Naive thymus-derived CD4-positive, alpha-beta T cell (primary cell): ENCODE measurements at regions of chr1 and their contacts with region 1.

Region 1: DNA sequence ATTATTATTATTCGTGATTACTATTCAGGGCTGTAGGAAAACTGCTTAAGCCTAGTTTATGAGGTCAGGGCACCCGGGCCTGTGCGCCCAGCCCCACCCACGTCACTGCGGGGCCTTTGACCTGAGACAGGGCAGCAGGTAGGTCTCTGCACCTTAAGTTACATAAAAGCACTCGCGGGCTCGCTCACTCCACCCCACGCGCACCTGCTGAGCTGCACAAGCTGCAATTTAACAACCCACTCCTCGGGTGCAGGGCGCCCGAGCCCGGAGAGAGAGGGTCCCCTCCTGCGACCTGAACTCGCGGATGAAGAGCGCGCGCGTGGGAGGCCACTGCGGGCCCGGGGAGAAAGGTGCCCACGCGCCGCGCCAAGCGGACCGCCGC is 477 bp downstream of the ICMT start:
- DNase-seq: no peak
- ATAC-seq: peak; percentile 3
- H3K4me3 ChIP-seq: peak overlapping the region; percentile 43
- H3K4me3 Mint-ChIP-seq: peak overlapping the region; percentile 79 to 90 (median 87)
- H3K27ac ChIP-seq: peak overlapping the region; percentile 66
- H3K27ac Mint-ChIP-seq: peak overlapping the region in 6 of 9 donors; percentile 28 to 78 (median 47)
- H3K4me1 ChIP-seq: peaks cover 0 to 12% of the 10 kb centered on the region in 2 donors
- H3K4me1 Mint-ChIP-seq: peaks cover 0 to 28% (median 18%) of the 10 kb centered on the region in 7 donors
- H3K27me3 ChIP-seq: no peaks in the 10 kb centered on the region
- H3K27me3 Mint-ChIP-seq: peaks cover 11 to 15% (median 12%) of the 10 kb centered on the region in 5 donors

Region 2: DNA sequence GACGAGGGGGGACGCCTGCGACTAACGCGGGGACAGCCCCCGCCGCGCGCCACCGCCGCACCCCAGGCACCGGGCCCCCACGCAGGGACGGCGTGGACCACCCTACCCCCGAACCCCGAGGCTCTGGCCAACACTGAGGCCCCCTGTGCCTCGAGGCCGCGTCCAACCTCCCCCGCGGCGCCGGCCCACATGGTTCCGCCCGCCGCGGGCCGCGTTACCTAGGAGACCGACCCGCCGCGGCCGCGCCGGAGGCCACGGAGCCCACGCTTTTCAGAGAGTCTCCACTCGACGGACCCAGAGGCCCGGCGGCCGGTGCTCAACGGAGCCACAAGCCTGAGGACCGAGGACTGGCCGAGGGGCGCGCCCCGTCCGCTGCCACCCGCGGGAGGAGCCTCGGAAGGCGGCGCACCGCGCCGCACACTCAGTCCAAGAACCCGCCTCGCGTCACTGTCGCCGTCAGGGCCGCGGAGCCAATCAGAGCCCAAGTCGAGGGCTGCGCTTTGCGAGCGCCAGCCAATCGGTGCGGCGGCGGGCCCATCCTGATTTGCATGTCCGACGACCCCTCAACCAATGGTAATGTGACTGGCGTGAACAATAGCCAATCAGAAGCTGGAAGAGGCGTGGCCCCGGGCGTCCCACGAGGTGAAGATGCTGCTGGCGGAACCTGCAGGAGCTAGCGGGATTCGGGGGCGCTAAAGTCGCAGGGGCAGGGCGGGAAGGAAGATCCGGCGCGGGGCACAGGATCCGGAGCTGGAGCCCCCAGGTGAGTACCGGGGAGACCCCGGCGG is 243.1 kb before region 1 on chr1 and contains the start of gene NPHP4:
- CTCF ChIA-PET with region 1: no interaction called
- POLR2A ChIA-PET with region 1: no interaction called
- intact Hi-C with region 1: loop called in 1 of 2 experiments (anchors 2 kb)
- DNase-seq: peak; percentile 95 to 99 (median 99)
- ATAC-seq: peak; percentile 93
- H3K4me3 ChIP-seq: peak within 1 kb of the TSS; percentile 88
- H3K4me3 Mint-ChIP-seq: peak within 1 kb of the TSS; percentile 88 to 100 (median 96)
- H3K27ac ChIP-seq: peak within 1 kb of the TSS; percentile 94
- H3K27ac Mint-ChIP-seq: peak within 1 kb of the TSS; percentile 88 to 97 (median 96)
- H3K4me1 ChIP-seq: peaks cover 23 to 32% of the 10 kb centered on the region in 2 donors
- H3K4me1 Mint-ChIP-seq: peaks cover 23 to 49% (median 40%) of the 10 kb centered on the region in 7 donors
- H3K27me3 ChIP-seq: no peaks in the 10 kb centered on the region
- H3K27me3 Mint-ChIP-seq: peaks cover 0 to 2% (median 0%) of the 10 kb centered on the region in 5 donors
- total RNA-seq, gene NPHP4: 9.0 to 20.6 (median 11.1) TPM

Region 3: DNA sequence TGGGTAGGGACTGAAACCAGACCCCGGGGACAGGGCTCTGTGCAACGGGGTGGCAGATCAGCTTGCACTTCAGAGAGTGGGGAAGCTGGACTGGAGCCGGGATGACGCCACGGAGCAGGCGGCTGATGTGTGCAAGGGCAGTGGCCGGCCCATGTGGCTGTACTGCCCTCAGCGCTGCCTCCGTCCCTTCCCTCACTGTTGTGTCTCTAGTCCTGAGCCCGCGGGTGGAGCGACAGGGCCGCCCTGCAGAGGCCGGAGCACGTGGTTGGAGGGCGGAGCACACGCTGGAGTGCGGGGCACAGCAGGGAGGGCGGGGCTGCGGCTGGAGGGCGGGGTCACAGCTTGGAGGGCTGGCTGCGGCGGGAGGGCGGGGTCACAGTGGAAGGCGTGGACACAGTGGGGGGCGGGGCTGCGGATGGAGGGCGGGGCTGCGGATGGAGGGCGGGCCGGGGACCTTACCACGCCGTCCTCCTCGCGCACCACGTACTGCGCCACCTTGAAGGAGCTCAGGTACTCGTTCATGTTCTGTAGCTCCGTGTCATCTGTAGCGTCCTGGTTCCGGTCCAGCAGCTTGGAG is 107.6 kb before region 1 on chr1:
- CTCF ChIA-PET with region 1: no interaction called
- POLR2A ChIA-PET with region 1: no interaction called
- intact Hi-C with region 1: loop called in 1 of 2 experiments (anchors 10 kb)
- DNase-seq: peak; percentile 42 to 76 (median 67)
- ATAC-seq: peak; percentile 96
- H3K4me3 ChIP-seq: no peak overlapping the region
- H3K4me3 Mint-ChIP-seq: peak overlapping the region in 4 of 10 donors; percentile 25 to 73 (median 30)
- H3K27ac ChIP-seq: no peak overlapping the region
- H3K27ac Mint-ChIP-seq: no peak overlapping the region
- H3K4me1 ChIP-seq: peaks cover 0 to 3% of the 10 kb centered on the region in 2 donors
- H3K4me1 Mint-ChIP-seq: peaks cover 0 to 8% (median 0%) of the 10 kb centered on the region in 7 donors
- H3K27me3 ChIP-seq: no peaks in the 10 kb centered on the region
- H3K27me3 Mint-ChIP-seq: peaks cover 0 to 6% (median 0%) of the 10 kb centered on the region in 5 donors

Region 4: GRCh38 chr1:6205849-6206519 is 29.3 kb before region 1 on chr1 and contains the start of gene RNF207:
- CTCF ChIA-PET with region 1: no interaction called
- POLR2A ChIA-PET with region 1: interaction called, 8 read pairs
- intact Hi-C with region 1: loop called (anchors 1 to 2 kb)
- DNase-seq: peak in 5 of 9 donors; percentile 21 to 86 (median 28)
- ATAC-seq: peak; percentile 67
- H3K4me3 ChIP-seq: peak within 1 kb of the TSS; percentile 58
- H3K4me3 Mint-ChIP-seq: peak within 1 kb of the TSS; percentile 60 to 88 (median 80)
- H3K27ac ChIP-seq: no peak within 1 kb of the TSS
- H3K27ac Mint-ChIP-seq: peak within 1 kb of the TSS in 2 of 9 donors; percentile 36 to 69
- H3K4me1 ChIP-seq: peaks cover 0 to 5% of the 10 kb centered on the region in 2 donors
- H3K4me1 Mint-ChIP-seq: peaks cover 5 to 25% (median 15%) of the 10 kb centered on the region in 7 donors
- H3K27me3 ChIP-seq: peaks cover 0 to 8% of the 10 kb centered on the region in 2 donors
- H3K27me3 Mint-ChIP-seq: peaks cover 0 to 19% (median 6%) of the 10 kb centered on the region in 5 donors
- total RNA-seq, gene RNF207: 0.81 to 83.6 (median 3.1) TPM

Region 5: DNA sequence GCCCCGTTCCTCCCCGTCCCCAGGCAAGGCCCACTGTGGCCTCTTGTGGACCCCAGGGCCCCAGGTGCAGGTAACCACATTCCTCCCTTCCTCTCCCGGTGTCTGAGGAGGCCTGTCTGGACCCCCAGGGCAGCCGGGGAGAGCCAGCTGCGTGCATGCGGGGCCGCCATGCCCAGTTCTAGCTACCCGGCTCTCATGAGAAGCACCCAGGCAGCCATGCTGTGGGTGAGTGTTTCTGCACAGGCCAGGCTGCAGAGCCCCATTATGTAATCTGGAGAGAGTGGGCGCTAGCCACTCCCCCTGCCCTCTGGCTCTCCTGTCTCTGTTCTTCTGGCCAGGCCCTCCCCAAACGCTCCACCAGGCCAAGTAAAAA is 274.6 kb after region 1 on chr1:
- CTCF ChIA-PET with region 1: no interaction called
- POLR2A ChIA-PET with region 1: no interaction called
- intact Hi-C with region 1: no loop called
- DNase-seq: no peak
- ATAC-seq: no peak
- H3K4me3 ChIP-seq: no peak overlapping the region
- H3K4me3 Mint-ChIP-seq: no peak overlapping the region
- H3K27ac ChIP-seq: no peak overlapping the region
- H3K27ac Mint-ChIP-seq: no peak overlapping the region
- H3K4me1 ChIP-seq: no peaks in the 10 kb centered on the region
- H3K4me1 Mint-ChIP-seq: no peaks in the 10 kb centered on the region
- H3K27me3 ChIP-seq: no peaks in the 10 kb centered on the region
- H3K27me3 Mint-ChIP-seq: no peaks in the 10 kb centered on the region